Right cardiac atrium (tissue), 5 donors: ENCODE measurements at regions of chr2 and their contacts with region 1.

Region 1: GRCh38 chr2:68157402-68158133 is at the start of gene PNO1:
- DNase-seq: peak; percentile 94 to 97 (median 97)
- ATAC-seq: peak; percentile 98
- H3K4me3 ChIP-seq: peak within 1 kb of the TSS; percentile 76
- H3K27ac ChIP-seq: peak within 1 kb of the TSS; percentile 93
- H3K4me1 ChIP-seq: no peaks in the 10 kb centered on the region
- H3K27me3 ChIP-seq: no peaks in the 10 kb centered on the region
- total RNA-seq, gene PNO1: 8.3 to 15.8 (median 8.5) TPM

Region 2: GRCh38 chr2:67733517-67733916 is 424.1 kb before region 1 on chr2:
- intact Hi-C with region 1: no loop called
- DNase-seq: peak in 2 of 3 donors; percentile 15 to 47
- ATAC-seq: peak; percentile 51 to 76
- H3K4me3 ChIP-seq: no peak overlapping the region
- H3K27ac ChIP-seq: no peak overlapping the region
- H3K4me1 ChIP-seq: no peaks in the 10 kb centered on the region
- H3K27me3 ChIP-seq: no peaks in the 10 kb centered on the region

Region 3: DNA sequence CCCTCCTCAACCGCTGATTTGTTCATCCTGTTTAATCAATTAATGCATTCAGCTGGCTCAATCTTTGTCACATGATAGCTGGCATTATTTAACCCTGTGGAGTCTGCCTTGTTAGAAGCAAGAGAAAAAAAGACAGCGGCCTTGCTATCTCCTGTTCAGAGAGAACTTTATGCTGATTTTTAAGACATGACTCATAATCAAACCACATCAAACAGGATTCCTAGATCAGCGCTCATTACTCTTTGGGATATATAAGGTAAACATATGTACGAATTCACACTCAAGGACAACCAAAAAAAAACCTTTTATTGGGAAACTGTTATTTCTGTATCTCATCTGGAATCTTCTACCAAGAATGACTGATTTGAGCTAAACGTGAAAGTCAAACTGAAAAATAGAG is 289.8 kb before region 1 on chr2:
- intact Hi-C with region 1: no loop called
- DNase-seq: no peak
- ATAC-seq: no peak
- H3K4me3 ChIP-seq: no peak overlapping the region
- H3K27ac ChIP-seq: no peak overlapping the region
- H3K4me1 ChIP-seq: no peaks in the 10 kb centered on the region
- H3K27me3 ChIP-seq: no peaks in the 10 kb centered on the region

Region 4: DNA sequence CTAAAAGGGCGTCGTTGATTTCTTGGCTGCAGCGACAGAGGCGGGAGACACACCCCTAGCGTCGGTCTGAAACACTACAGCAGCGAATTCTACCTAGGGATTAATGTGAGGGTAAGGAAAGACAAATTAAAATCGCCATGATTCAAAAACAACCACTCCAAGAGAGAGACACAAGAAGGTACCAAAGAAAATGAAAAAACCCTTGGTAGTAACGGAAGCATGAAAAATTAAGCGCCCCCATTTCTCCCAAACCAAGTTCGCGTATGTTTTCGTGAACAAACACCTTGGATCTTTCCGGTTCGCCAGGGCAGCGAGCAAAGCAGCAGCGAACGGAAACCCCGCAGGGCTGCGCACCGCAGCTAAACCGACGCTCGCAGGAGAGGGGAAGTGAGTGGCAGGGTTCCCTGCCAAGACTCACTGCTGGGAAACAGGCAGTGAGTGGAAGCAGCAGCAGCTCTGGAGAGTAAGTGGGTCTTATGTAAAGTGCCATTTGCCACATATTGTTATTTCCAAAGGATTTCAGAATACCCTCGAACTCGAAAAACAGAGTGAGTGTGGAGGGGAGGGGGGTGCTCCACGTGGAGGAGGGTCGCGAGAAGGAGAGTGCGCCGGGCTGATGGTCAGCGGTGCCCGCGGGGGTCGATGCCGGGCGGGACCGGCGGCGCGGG is 93.8 kb after region 1 on chr2:
- intact Hi-C with region 1: loop called in 1 of 4 experiments (anchors 10 kb)
- DNase-seq: peak; percentile 61 to 80 (median 78)
- ATAC-seq: peak; percentile 55 to 59
- H3K4me3 ChIP-seq: peak overlapping the region; percentile 99
- H3K27ac ChIP-seq: peak overlapping the region; percentile 96
- H3K4me1 ChIP-seq: peaks cover 6% of the 10 kb centered on the region
- H3K27me3 ChIP-seq: no peaks in the 10 kb centered on the region